Right ventricle myocardium inferior (tissue), 1 donor: ENCODE measurements at regions of chr5 and their contacts with region 1.

Region 1: GRCh38 chr5:138752951-138753793 is at the start of gene CTNNA1:
- DNase-seq: peak; percentile 90
- ATAC-seq: peak; percentile 78
- total RNA-seq, gene CTNNA1: 322 TPM

Region 2: GRCh38 chr5:138316355-138316754 is 436.8 kb before region 1 on chr5:
- intact Hi-C with region 1: no loop called
- DNase-seq: no peak
- ATAC-seq: no peak

Region 3: GRCh38 chr5:138575194-138576015 is 177.8 kb before region 1 on chr5 and contains the start of gene HSPA9:
- intact Hi-C with region 1: loop called (anchors 2 kb)
- DNase-seq: peak; percentile 98
- ATAC-seq: peak; percentile 98
- total RNA-seq, gene HSPA9: 308 TPM

Region 4: GRCh38 chr5:138668376-138669079 is 84.6 kb before region 1 on chr5:
- intact Hi-C with region 1: loop called (anchors 5 kb)
- DNase-seq: peak; percentile 80
- ATAC-seq: peak; percentile 96

Region 5: GRCh38 chr5:138706655-138707480 is 46.3 kb before region 1 on chr5:
- intact Hi-C with region 1: no loop called
- DNase-seq: no peak
- ATAC-seq: peak; percentile 92

Region 6: DNA sequence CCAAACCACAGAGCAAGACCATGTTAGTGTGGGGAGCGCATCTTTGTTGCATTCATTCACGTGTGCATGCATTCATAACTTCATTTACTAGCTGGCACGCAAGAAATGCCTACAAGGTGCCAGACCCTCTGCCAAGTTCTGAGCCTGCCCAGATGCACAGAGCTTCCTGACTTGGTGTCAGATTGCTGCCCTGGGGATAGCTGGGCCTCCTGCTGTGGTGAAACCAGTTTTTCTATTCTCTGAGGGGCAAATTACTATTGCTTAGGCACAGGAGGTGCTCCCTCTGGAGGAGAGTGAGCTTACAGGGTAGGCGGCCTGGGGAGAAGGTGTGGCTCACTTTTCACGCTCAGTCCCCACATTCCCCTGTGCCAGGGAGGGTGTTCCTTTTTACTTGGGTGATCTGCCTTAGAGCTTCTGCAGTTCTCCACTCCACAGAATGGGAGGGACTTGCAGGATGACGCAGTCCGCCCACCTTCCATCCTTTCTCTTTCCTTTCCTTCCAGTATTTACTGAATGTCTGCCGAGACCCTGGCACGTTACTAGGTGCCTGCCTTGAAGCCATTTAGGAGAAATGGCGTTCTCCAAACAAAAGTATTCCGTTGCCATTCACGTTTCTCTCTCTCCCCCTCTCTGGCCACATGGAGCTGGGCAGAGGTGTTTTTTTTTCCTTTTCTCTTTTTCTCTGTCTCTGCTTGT is 27.9 kb before region 1 on chr5:
- intact Hi-C with region 1: loop called (anchors 2 kb)
- DNase-seq: no peak
- ATAC-seq: peak; percentile 68

Region 7: GRCh38 chr5:138927979-138928378 is 174.8 kb after region 1 on chr5:
- intact Hi-C with region 1: loop called (anchors 1 kb)
- DNase-seq: peak; percentile 86
- ATAC-seq: peak; percentile 83